ENCODE measurements at regions of chr1 and their contacts with region 1.

Region 1: DNA sequence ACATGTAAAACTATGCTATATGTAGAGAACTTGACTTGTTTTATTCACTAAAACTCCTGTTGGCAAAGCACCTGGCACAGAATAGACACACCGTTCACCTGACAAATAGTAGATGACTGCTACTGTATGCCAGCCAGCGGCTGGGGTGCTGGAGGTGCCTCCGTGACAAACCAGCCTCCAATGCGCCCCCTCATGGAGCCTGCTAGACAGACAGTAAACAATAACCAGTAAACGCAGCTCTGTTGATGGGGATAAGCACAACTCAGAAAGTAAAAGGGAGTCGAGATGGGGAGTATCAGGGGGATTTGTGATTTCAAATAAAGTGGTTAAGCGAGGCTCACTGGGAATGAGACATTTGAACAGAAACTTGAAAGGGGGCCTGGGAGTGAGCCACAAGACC is 107.2 kb downstream of the PRDM2 start:
- DNase-seq: no peak
- CTCF ChIP-seq: peak; percentile 36

Region 2: DNA sequence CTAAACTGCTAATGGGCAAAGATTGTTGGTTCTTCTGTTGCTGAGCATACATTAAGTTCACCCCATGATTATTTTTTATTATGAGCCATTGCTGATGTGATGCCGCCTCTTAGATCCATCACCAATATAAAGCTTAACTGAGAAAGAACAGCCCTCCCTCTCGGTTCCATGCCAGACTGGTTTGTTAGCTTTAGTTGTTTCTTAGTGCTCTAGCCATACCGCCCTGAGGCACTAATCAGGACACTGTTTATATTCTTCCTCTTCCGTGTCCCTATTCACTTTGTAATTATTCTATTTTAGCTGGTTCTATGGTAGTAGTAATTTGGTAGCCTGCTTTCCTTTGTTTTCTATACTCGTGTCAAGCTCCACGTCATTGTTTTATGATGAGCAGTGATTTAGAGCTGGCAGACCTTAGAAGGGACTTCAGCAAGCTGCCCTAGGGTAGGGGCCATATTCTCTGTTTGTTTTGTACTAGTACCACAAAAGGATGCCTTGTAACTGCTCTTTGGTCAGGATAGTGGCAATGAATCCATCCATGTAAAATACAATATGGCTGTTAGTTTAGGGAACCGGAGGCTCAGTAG is 250.9 kb before region 1 on chr1:
- in situ Hi-C with region 1: no loop called
- DNase-seq: no peak
- CTCF ChIP-seq: no peak

Region 3: GRCh38 chr1:13662493-13662892 is 144.7 kb before region 1 on chr1:
- in situ Hi-C with region 1: loop called (anchors 10 kb)
- DNase-seq: no peak
- CTCF ChIP-seq: no peak

Measured in GM13977 (cell line).